Heart left ventricle (tissue), 16 donors: ENCODE measurements at regions of chr2 and their contacts with region 1.

Region 1: GRCh38 chr2:201860636-201861066 is 54.3 kb downstream of the CDK15 start:
- DNase-seq: peak in 3 of 5 donors; percentile 33 to 40 (median 36)
- ATAC-seq: peak; percentile 80 to 91 (median 88)
- H3K4me3 ChIP-seq: no peak overlapping the region
- H3K27ac ChIP-seq: no peak overlapping the region
- H3K4me1 ChIP-seq: peaks cover 0 to 7% (median 0%) of the 10 kb centered on the region in 12 donors
- H3K27me3 ChIP-seq: peaks cover 0 to 26% (median 0%) of the 10 kb centered on the region in 9 donors
- CTCF ChIP-seq: peak; percentile 66 to 91 (median 84)
- POLR2A ChIP-seq: no peak

Region 2: DNA sequence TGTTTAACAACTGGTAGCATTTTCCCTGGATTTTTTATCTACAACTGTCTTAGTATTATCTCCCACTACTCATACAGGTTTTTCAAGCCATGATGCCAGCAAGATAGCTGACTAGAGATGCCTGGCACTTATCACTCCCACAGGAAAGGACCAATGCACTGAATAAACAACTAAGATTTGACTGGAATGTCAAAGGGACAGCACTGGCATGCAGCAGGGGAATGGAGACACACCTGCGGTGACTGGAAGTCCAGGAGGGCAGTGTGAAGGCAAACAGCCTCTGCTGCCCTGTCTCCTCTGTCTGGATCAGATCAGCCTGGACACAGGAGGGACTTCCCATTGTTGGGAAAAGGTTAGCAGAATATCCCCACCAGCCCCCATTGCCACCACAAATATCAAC is 302.4 kb before region 1 on chr2:
- intact Hi-C with region 1: no loop called
- DNase-seq: no peak
- ATAC-seq: no peak
- H3K4me3 ChIP-seq: no peak overlapping the region
- H3K27ac ChIP-seq: no peak overlapping the region
- H3K4me1 ChIP-seq: no peaks in the 10 kb centered on the region
- H3K27me3 ChIP-seq: no peaks in the 10 kb centered on the region
- CTCF ChIP-seq: no peak
- POLR2A ChIP-seq: no peak

Region 3: GRCh38 chr2:201795607-201796477 is 64.8 kb before region 1 on chr2:
- intact Hi-C with region 1: loop called in 3 of 10 experiments (anchors 2 to 10 kb)
- DNase-seq: peak in 1 of 5 donors; percentile 18
- ATAC-seq: peak in 3 of 4 donors; percentile 61 to 69 (median 64)
- H3K4me3 ChIP-seq: no peak overlapping the region
- H3K27ac ChIP-seq: no peak overlapping the region
- H3K4me1 ChIP-seq: no peaks in the 10 kb centered on the region
- H3K27me3 ChIP-seq: peaks cover 0 to 3% (median 0%) of the 10 kb centered on the region in 9 donors
- CTCF ChIP-seq: peak; percentile 41 to 72 (median 62)
- POLR2A ChIP-seq: no peak

Region 4: GRCh38 chr2:202056392-202057010 is 195.8 kb after region 1 on chr2:
- intact Hi-C with region 1: loop called in 6 of 10 experiments (anchors 5 to 10 kb)
- DNase-seq: no peak
- ATAC-seq: no peak
- H3K4me3 ChIP-seq: no peak overlapping the region
- H3K27ac ChIP-seq: no peak overlapping the region
- H3K4me1 ChIP-seq: peaks cover 0 to 10% (median 0%) of the 10 kb centered on the region in 12 donors
- H3K27me3 ChIP-seq: peaks cover 0 to 13% (median 0%) of the 10 kb centered on the region in 9 donors
- CTCF ChIP-seq: peak in 8 of 12 donors; percentile 11 to 39 (median 28)
- POLR2A ChIP-seq: no peak

Region 5: GRCh38 chr2:202064171-202064880 is 203.7 kb after region 1 on chr2:
- intact Hi-C with region 1: loop called in 5 of 10 experiments (anchors 5 to 10 kb)
- DNase-seq: peak in 3 of 5 donors; percentile 20 to 52 (median 34)
- ATAC-seq: peak; percentile 32 to 92 (median 80)
- H3K4me3 ChIP-seq: no peak overlapping the region
- H3K27ac ChIP-seq: peak overlapping the region in 3 of 12 donors; percentile 5 to 40 (median 28)
- H3K4me1 ChIP-seq: peaks cover 0 to 12% (median 5%) of the 10 kb centered on the region in 12 donors
- H3K27me3 ChIP-seq: no peaks in the 10 kb centered on the region
- CTCF ChIP-seq: no peak
- POLR2A ChIP-seq: no peak

Region 6: GRCh38 chr2:202158796-202159195 is 298.1 kb after region 1 on chr2:
- intact Hi-C with region 1: loop called in 2 of 10 experiments (anchors 5 kb)
- DNase-seq: no peak
- ATAC-seq: peak in 3 of 4 donors; percentile 48 to 61 (median 52)
- H3K4me3 ChIP-seq: no peak overlapping the region
- H3K27ac ChIP-seq: no peak overlapping the region
- H3K4me1 ChIP-seq: peaks cover 0 to 12% (median 5%) of the 10 kb centered on the region in 12 donors
- H3K27me3 ChIP-seq: no peaks in the 10 kb centered on the region
- CTCF ChIP-seq: peak in 7 of 12 donors; percentile 21 to 43 (median 32)
- POLR2A ChIP-seq: no peak

Region 7: GRCh38 chr2:202178342-202178958 is 317.8 kb after region 1 on chr2:
- intact Hi-C with region 1: loop called (anchors 1 to 5 kb)
- DNase-seq: peak in 2 of 5 donors; percentile 35 to 40
- ATAC-seq: peak; percentile 51 to 82 (median 77)
- H3K4me3 ChIP-seq: no peak overlapping the region
- H3K27ac ChIP-seq: no peak overlapping the region
- H3K4me1 ChIP-seq: no peaks in the 10 kb centered on the region
- H3K27me3 ChIP-seq: no peaks in the 10 kb centered on the region
- CTCF ChIP-seq: peak; percentile 68 to 91 (median 82)
- POLR2A ChIP-seq: no peak